A673 (cell line): ENCODE measurements at regions of chr20 and their contacts with region 1.

Region 1: GRCh38 chr20:462199-462991 is at the start of gene TBC1D20:
- DNase-seq: peak; percentile 94
- H3K4me3 ChIP-seq: peak within 1 kb of the TSS; percentile 91
- H3K27ac ChIP-seq: peak within 1 kb of the TSS; percentile 91
- H3K4me1 ChIP-seq: peaks cover 15% of the 10 kb centered on the region
- H3K27me3 ChIP-seq: no peaks in the 10 kb centered on the region
- CTCF ChIP-seq: peak; percentile 44
- total RNA-seq, gene TBC1D20: 31.8 and 34.3 TPM in 2 replicates

Region 2: DNA sequence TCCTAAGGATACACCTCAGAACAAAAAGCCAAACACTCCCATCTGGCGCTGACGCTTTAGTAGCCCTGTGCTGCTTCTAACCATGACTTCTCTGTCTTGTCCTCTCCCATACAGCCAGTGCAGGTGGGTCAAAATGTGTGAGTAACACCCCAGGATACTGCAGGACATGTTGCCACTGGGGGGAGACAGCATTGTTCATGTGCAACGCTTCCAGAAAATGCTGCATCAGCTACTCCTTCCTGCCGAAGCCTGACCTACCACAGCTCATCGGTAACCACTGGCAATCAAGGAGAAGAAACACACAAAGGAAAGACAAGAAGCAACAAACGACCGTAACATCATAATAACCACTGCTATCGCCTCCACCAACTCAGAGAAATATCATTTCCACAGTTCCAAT is 203.4 kb before region 1 on chr20:
- CTCF ChIA-PET with region 1: interaction called, 13 read pairs
- POLR2A ChIA-PET with region 1: no interaction called
- intact Hi-C with region 1: no loop called
- DNase-seq: no peak
- H3K4me3 ChIP-seq: no peak overlapping the region
- H3K27ac ChIP-seq: no peak overlapping the region
- H3K4me1 ChIP-seq: peaks cover 20% of the 10 kb centered on the region
- H3K27me3 ChIP-seq: no peaks in the 10 kb centered on the region
- CTCF ChIP-seq: 0 out of 2 replicates have a peak, but pooled peaks have one; percentile 24